Thyroid gland (tissue), 4 donors: ENCODE measurements at regions of chr1 and their contacts with region 1.

Region 1: DNA sequence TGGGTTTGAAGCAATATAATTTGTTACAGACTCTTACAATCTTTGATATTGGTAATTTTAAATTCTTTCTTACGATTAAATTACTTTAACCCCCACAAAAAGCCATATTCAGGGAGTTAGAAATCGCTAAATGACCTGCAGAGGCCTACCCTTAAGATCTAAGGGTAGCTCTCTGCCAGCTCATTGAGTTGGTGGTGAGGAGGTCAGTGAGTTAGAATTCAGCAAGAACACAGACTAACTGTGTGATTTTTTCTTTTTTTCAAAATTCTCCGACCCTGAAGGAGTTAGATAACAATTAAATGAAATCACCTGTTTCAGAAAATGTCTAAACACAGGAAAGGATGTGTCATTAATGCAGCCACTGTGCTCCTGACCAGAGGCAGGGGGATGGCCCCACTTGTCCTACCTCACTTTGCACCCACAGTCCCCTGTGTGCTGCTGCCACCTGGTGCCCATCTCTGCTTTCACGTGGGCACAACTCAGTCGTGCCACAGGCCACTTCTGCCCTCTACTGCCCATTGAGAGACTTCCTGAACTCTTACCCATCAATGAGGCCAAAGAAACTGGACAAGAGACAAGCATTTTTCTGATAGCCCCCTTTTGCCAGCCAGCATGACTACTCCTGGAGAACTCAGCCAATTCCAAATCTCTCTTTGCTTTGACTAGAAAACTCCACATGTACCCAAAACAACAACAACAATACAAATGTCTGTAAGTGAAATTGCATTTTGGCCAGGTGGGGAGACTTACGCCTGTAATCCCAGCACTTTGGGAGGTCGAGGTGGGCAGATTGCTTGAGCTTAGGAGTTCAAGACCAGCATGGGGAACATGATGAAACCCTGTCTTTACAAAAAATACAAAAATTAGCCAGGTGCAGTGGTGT is 8.4 kb downstream of the CFAP45 start:
- DNase-seq: peak; percentile 82 to 89
- H3K4me3 ChIP-seq: no peak overlapping the region
- H3K27ac ChIP-seq: no peak overlapping the region
- H3K4me1 ChIP-seq: peaks cover 12 to 13% of the 10 kb centered on the region in 2 donors
- H3K27me3 ChIP-seq: no peaks in the 10 kb centered on the region
- CTCF ChIP-seq: peak; percentile 74 to 100 (median 98)
- POLR2A ChIP-seq: no peak

Region 2: GRCh38 chr1:159780583-159781582 is 110.6 kb before region 1 on chr1 and contains the start of gene DUSP23:
- intact Hi-C with region 1: loop called (anchors 5 kb)
- DNase-seq: peak; percentile 98
- H3K4me3 ChIP-seq: peak within 1 kb of the TSS; percentile 80 to 93 (median 90)
- H3K27ac ChIP-seq: peak within 1 kb of the TSS; percentile 36 to 83 (median 64)
- H3K4me1 ChIP-seq: peaks cover 4 to 8% of the 10 kb centered on the region in 2 donors
- H3K27me3 ChIP-seq: no peaks in the 10 kb centered on the region
- CTCF ChIP-seq: peak; percentile 78 to 99 (median 96)
- POLR2A ChIP-seq: peak; percentile 48 to 87
- total RNA-seq, gene DUSP23: 97.3 to 183 (median 99.9) TPM

Region 3: GRCh38 chr1:159798893-159799292 is 92.6 kb before region 1 on chr1:
- intact Hi-C with region 1: loop called (anchors 2 kb)
- DNase-seq: peak; percentile 53 to 62
- H3K4me3 ChIP-seq: no peak overlapping the region
- H3K27ac ChIP-seq: peak overlapping the region in 2 of 3 donors; percentile 25 to 53
- H3K4me1 ChIP-seq: peaks cover 7 to 15% of the 10 kb centered on the region in 2 donors
- H3K27me3 ChIP-seq: no peaks in the 10 kb centered on the region
- CTCF ChIP-seq: peak in 5 of 6 experiments; percentile 19 to 71 (median 57)
- POLR2A ChIP-seq: no peak